ENCODE measurements at regions of chr4 and their contacts with region 1.

Region 1: GRCh38 chr4:109977854-109978501 is 65.3 kb downstream of the EGF start:
- DNase-seq: no peak
- H3K4me3 ChIP-seq: no peak overlapping the region
- H3K27ac ChIP-seq: no peak overlapping the region
- H3K4me1 ChIP-seq: no peaks in the 10 kb centered on the region
- H3K27me3 ChIP-seq: no peaks in the 10 kb centered on the region
- CTCF ChIP-seq: peak; percentile 56

Region 2: DNA sequence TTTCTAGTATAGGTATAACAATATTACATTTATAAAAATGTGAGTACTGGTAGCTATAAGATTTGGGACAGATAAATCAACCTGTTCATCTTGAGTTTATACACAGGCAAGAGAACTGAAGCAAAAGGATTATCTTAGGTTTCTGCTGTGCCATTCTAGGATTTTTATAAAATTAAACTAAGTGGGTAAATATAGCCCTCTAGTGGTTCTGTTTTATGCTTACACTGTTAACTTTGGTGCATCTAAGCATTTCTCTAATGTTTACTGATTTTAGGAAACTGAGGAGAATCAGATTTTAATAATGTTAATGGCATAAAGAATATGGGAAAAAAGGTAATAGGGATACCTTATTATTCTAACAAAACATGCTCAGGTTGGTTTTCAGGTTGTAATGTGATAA is 151.3 kb before region 1 on chr4:
- intact Hi-C with region 1: loop called (anchors 10 kb)
- DNase-seq: no peak
- H3K4me3 ChIP-seq: no peak overlapping the region
- H3K27ac ChIP-seq: no peak overlapping the region
- H3K4me1 ChIP-seq: no peaks in the 10 kb centered on the region
- H3K27me3 ChIP-seq: no peaks in the 10 kb centered on the region
- CTCF ChIP-seq: peak; percentile 20

Region 3: GRCh38 chr4:110260299-110260698 is 282.3 kb after region 1 on chr4:
- intact Hi-C with region 1: no loop called
- DNase-seq: no peak
- H3K4me3 ChIP-seq: no peak overlapping the region
- H3K27ac ChIP-seq: no peak overlapping the region
- H3K4me1 ChIP-seq: no peaks in the 10 kb centered on the region
- H3K27me3 ChIP-seq: no peaks in the 10 kb centered on the region
- CTCF ChIP-seq: no peak

Region 4: DNA sequence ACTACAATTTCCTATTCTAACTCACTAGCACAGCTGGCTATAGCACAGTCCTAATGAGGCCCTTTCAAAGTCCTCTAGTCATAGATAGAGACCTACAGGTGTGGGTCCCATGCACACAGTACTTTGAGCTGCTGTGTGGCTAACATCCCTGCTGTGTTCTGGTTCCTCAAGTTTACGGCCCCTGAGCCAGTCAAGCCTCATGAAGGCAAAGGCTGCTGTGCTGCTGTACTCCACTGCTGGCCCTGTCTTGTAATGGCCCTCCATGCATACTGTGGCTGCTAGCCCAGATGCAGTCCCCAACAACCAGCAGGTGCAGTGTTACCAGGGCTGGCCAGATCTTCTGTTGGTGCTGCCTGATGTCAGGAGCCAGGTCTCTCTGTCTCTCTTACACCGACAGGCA is 474.6 kb after region 1 on chr4:
- intact Hi-C with region 1: no loop called
- DNase-seq: no peak
- H3K4me3 ChIP-seq: no peak overlapping the region
- H3K27ac ChIP-seq: no peak overlapping the region
- H3K4me1 ChIP-seq: no peaks in the 10 kb centered on the region
- H3K27me3 ChIP-seq: no peaks in the 10 kb centered on the region
- CTCF ChIP-seq: no peak

Measured in colonic mucosa (tissue), 4 donors.